AG04449 (cell line): ENCODE measurements at regions of chr4 and their contacts with region 1.

Region 1: GRCh38 chr4:153142700-153143438 is 61.4 kb upstream of the TRIM2 start:
- DNase-seq: no peak
- H3K4me3 ChIP-seq: no peak overlapping the region
- CTCF ChIP-seq: peak; percentile 76

Region 2: GRCh38 chr4:153296040-153296823 is 153.4 kb after region 1 on chr4:
- CTCF ChIA-PET with region 1: interaction called, 10 read pairs
- POLR2A ChIA-PET with region 1: no interaction called
- DNase-seq: peak; percentile 61
- H3K4me3 ChIP-seq: no peak overlapping the region
- CTCF ChIP-seq: no peak

Region 3: GRCh38 chr4:153318696-153319320 is 175.9 kb after region 1 on chr4:
- CTCF ChIA-PET with region 1: interaction called, 73 read pairs
- POLR2A ChIA-PET with region 1: no interaction called
- DNase-seq: no peak
- H3K4me3 ChIP-seq: no peak overlapping the region
- CTCF ChIP-seq: peak; percentile 64

Region 4: DNA sequence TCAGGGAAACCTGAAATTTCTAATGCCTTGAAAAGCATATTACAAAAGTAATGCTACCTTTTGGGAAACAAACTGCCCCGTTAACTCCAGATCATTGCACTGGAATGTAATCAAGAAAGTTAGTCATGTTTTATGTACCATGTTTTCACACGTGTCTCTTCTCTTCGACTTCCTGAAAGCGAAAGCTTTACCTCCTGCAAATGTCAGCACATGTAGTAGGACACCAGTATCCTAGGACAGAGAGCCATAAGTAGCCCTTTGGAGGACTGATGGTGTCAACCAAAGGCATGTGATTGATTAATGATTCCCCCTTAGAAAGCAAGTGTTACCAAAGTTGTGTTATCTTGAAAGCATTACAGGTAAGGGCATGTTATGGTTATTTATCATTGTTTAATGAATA is 192.8 kb after region 1 on chr4:
- CTCF ChIA-PET with region 1: interaction called, 10 read pairs
- POLR2A ChIA-PET with region 1: no interaction called
- DNase-seq: no peak
- H3K4me3 ChIP-seq: no peak overlapping the region
- CTCF ChIP-seq: no peak

Region 5: GRCh38 chr4:153573881-153574802 is 431.3 kb after region 1 on chr4:
- CTCF ChIA-PET with region 1: interaction called, 28 read pairs
- POLR2A ChIA-PET with region 1: no interaction called
- DNase-seq: peak; percentile 67
- H3K4me3 ChIP-seq: no peak overlapping the region
- CTCF ChIP-seq: peak; percentile 79